ENCODE measurements at regions of chr6 and their contacts with region 1.

Region 1: GRCh38 chr6:35583893-35584688 is 71.4 kb upstream of the TULP1 start:
- DNase-seq: peak in 1 of 2 donors; percentile 42
- ATAC-seq: peak; percentile 26 to 90 (median 47)
- H3K4me3 ChIP-seq: no peak overlapping the region
- H3K27ac ChIP-seq: peak overlapping the region; percentile 95
- H3K4me1 ChIP-seq: peaks cover 70% of the 10 kb centered on the region
- H3K27me3 ChIP-seq: no peaks in the 10 kb centered on the region
- CTCF ChIP-seq: peak; percentile 88

Region 2: DNA sequence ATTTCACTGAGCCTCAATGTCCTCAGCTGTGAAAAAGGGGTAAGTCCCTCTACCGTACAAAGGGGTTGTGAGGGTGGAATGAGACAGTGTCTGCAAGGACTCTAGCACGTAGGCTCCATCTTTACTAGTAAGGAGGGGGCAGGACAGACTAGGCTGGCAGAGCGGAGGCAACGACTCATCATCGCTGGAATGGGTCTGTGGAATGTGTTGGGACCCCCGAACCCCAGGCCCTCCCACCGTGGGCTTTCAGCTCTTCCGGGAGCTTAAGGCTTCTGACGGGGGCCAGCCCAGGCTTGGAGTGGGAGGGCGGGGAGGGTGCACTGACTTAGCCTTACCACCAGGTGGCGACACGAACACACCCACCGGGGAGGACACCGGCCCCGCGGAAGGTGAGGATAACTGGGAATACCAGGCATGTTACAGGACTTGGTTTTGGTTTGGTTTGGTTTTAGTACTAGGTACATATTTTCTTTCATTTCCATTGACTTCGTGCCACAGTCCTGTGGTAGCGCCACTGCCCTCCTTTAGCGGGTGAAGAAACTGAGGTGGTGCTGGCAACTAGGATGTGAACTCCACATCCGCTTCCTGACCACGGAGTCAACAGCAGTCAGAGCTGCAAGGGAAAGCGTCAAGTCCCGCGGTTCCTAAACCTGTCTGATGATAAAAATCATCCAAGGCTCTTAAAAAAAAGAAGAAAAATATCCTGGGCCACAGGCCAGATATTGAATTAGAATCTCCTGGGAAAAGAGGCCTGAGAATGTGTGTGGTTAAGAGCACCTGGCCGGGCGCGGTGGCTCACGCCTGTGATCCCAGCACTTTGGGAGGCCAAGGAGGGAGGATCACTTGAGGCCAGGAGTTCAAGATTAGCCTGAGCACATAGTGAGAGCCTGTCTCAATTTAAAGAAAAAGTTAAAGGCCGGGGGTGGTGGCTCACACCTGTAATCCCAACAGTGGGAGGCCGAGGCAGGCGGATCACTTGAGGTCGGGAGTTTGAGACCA is 61.1 kb before region 1 on chr6:
- intact Hi-C with region 1: loop called in 1 of 2 experiments (anchors 1 kb)
- DNase-seq: peak; percentile 75 to 88
- ATAC-seq: peak; percentile 89 to 97 (median 94)
- H3K4me3 ChIP-seq: peak overlapping the region; percentile 52
- H3K27ac ChIP-seq: no peak overlapping the region
- H3K4me1 ChIP-seq: no peaks in the 10 kb centered on the region
- H3K27me3 ChIP-seq: no peaks in the 10 kb centered on the region
- CTCF ChIP-seq: peak; percentile 99

Region 3: GRCh38 chr6:35681298-35681697 is 97.2 kb after region 1 on chr6:
- intact Hi-C with region 1: loop called (anchors 5 to 10 kb)
- DNase-seq: no peak
- ATAC-seq: no peak
- H3K4me3 ChIP-seq: peak overlapping the region; percentile 15
- H3K27ac ChIP-seq: peak overlapping the region; percentile 46
- H3K4me1 ChIP-seq: peaks cover 79% of the 10 kb centered on the region
- H3K27me3 ChIP-seq: no peaks in the 10 kb centered on the region
- CTCF ChIP-seq: no peak

Region 4: GRCh38 chr6:35688581-35689322 is 104.7 kb after region 1 on chr6 and contains the start of gene FKBP5:
- intact Hi-C with region 1: loop called (anchors 5 to 10 kb)
- DNase-seq: peak; percentile 98 to 99
- ATAC-seq: peak; percentile 75 to 91 (median 82)
- H3K4me3 ChIP-seq: peak within 1 kb of the TSS; percentile 85
- H3K27ac ChIP-seq: peak within 1 kb of the TSS; percentile 96
- H3K4me1 ChIP-seq: peaks cover 40% of the 10 kb centered on the region
- H3K27me3 ChIP-seq: no peaks in the 10 kb centered on the region
- CTCF ChIP-seq: no peak
- total RNA-seq, gene FKBP5: 56.5 to 1,905 (median 378) TPM

Region 5: GRCh38 chr6:35736253-35736894 is 152.3 kb after region 1 on chr6:
- intact Hi-C with region 1: loop called (anchors 1 to 5 kb)
- DNase-seq: peak; percentile 72 to 84
- ATAC-seq: peak; percentile 29 to 57 (median 42)
- H3K4me3 ChIP-seq: no peak overlapping the region
- H3K27ac ChIP-seq: no peak overlapping the region
- H3K4me1 ChIP-seq: peaks cover 36% of the 10 kb centered on the region
- H3K27me3 ChIP-seq: no peaks in the 10 kb centered on the region
- CTCF ChIP-seq: peak; percentile 87